ENCODE measurements at regions of chr17 and their contacts with region 1.

Region 1: GRCh38 chr17:39036014-39036413 is 68.8 kb upstream of the FBXO47 start:
- DNase-seq: peak; percentile 68 to 89
- H3K4me3 ChIP-seq: 0 out of 2 replicates have a peak overlapping the region, but pooled peaks have one; percentile 16
- H3K27ac ChIP-seq: peak overlapping the region; percentile 38
- H3K4me1 ChIP-seq: peaks cover 26% of the 10 kb centered on the region
- H3K27me3 ChIP-seq: no peaks in the 10 kb centered on the region
- CTCF ChIP-seq: no peak

Region 2: DNA sequence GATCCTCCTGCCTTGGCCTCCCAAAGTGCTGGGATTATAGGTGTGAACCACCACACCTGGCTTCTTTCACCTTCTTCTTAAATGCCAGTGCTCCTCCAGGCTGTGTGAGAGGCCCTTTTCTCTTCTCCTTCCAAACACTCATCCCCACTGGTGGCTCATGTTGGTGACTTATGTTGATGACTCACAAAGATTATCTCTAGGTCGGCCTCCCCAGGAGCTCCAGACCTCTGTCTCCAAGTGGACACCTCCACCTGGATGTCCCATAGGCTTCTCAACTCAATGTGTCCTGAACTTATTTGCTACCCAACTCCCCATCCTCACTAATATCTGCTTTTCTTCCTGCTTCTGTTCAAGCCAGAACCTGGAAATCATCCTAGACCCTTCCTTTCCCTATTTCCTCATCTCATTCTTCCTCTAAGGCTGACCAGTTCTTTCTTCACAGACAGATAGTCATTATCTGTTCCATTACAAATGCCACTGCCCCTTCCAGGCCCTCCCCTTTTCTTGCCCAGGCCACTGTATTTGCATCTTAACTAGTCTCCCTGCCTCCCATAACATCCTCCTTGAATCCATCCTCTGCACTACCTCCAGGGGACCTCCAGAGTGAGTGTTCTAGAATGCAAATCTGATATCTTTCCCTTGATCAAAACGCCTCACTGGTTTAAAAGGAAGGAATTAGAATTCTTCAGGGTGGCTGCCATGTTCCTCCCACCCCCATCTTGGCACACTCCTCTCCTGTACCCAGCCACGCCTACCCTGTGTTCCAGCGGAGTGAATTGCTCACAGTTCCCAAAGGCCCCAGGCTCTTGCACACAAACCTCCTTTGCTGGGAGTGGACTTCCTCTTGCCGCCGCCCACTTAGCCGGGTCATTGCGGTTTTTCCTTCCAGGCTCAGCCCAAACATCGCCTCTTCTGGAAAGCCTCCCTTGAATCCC is 34.0 kb before region 1 on chr17:
- CTCF ChIA-PET with region 1: no interaction called
- POLR2A ChIA-PET with region 1: no interaction called
- intact Hi-C with region 1: loop called (anchors 5 kb)
- DNase-seq: peak; percentile 81 to 86
- H3K4me3 ChIP-seq: 0 out of 2 replicates have a peak overlapping the region, but pooled peaks have one; percentile 23
- H3K27ac ChIP-seq: peak overlapping the region; percentile 24
- H3K4me1 ChIP-seq: peaks cover 18% of the 10 kb centered on the region
- H3K27me3 ChIP-seq: no peaks in the 10 kb centered on the region
- CTCF ChIP-seq: no peak

Region 3: GRCh38 chr17:39057701-39058206 is 21.7 kb after region 1 on chr17:
- CTCF ChIA-PET with region 1: no interaction called
- POLR2A ChIA-PET with region 1: no interaction called
- intact Hi-C with region 1: loop called (anchors 2 kb)
- DNase-seq: no peak
- H3K4me3 ChIP-seq: peak overlapping the region; percentile 73
- H3K27ac ChIP-seq: no peak overlapping the region
- H3K4me1 ChIP-seq: peaks cover 12% of the 10 kb centered on the region
- H3K27me3 ChIP-seq: no peaks in the 10 kb centered on the region
- CTCF ChIP-seq: no peak

Region 4: GRCh38 chr17:39225959-39226683 is 190.1 kb after region 1 on chr17:
- CTCF ChIA-PET with region 1: no interaction called
- POLR2A ChIA-PET with region 1: no interaction called
- intact Hi-C with region 1: no loop called
- DNase-seq: peak in 1 of 2 experiments; percentile 40
- H3K4me3 ChIP-seq: no peak overlapping the region
- H3K27ac ChIP-seq: no peak overlapping the region
- H3K4me1 ChIP-seq: peaks cover 10% of the 10 kb centered on the region; the same call in 1 of the 2 replicates
- H3K27me3 ChIP-seq: no peaks in the 10 kb centered on the region
- CTCF ChIP-seq: no peak

Measured in PC-9 (cell line).